Activated naive CD4-positive, alpha-beta T cell treated with anti-CD3 and anti-CD28 coated beads for 36 hours (primary cell): ENCODE measurements at regions of chr2 and their contacts with region 1.

Region 1: GRCh38 chr2:136305517-136306192 is 187.7 kb upstream of the CXCR4 start:
- DNase-seq: peak; percentile 85
- H3K4me3 Mint-ChIP-seq: no peak overlapping the region
- H3K27ac Mint-ChIP-seq: peak overlapping the region; percentile 81
- H3K4me1 Mint-ChIP-seq: peaks cover 21% of the 10 kb centered on the region
- H3K27me3 Mint-ChIP-seq: no peaks in the 10 kb centered on the region

Region 2: DNA sequence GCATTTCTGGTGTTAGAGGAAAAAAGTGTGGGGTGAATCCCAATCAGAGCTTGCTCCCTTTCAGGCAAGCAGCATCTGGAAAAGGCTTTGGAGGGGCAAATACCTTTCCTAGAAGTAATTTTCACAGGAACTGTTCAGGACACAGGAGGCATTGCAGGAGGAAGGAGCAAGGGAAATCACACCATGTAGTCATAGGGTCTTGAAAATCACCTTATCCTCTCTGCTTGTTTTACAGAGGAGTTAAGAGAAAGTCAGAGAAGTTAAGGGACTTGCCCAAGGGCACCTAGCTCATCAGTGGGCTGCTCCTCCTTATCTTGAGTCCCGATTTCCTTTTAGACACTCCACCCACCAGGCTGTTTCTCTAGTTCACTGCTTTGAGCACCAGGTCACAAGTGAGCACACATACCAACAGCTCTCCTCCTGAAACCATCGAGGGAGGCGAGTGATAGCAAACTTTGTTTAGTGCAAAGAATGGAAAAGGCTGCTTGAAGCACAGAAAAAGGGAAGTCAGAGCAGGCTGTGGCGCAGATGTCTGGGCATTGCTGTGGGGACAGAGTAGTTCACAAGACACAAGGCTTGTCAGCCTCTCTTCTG is 98.5 kb before region 1 on chr2:
- CTCF ChIA-PET with region 1: no interaction called
- intact Hi-C with region 1: loop called (anchors 1 kb)
- DNase-seq: peak; percentile 61
- H3K4me3 Mint-ChIP-seq: no peak overlapping the region
- H3K27ac Mint-ChIP-seq: peak overlapping the region; percentile 86
- H3K4me1 Mint-ChIP-seq: peaks cover 37% of the 10 kb centered on the region
- H3K27me3 Mint-ChIP-seq: no peaks in the 10 kb centered on the region

Region 3: DNA sequence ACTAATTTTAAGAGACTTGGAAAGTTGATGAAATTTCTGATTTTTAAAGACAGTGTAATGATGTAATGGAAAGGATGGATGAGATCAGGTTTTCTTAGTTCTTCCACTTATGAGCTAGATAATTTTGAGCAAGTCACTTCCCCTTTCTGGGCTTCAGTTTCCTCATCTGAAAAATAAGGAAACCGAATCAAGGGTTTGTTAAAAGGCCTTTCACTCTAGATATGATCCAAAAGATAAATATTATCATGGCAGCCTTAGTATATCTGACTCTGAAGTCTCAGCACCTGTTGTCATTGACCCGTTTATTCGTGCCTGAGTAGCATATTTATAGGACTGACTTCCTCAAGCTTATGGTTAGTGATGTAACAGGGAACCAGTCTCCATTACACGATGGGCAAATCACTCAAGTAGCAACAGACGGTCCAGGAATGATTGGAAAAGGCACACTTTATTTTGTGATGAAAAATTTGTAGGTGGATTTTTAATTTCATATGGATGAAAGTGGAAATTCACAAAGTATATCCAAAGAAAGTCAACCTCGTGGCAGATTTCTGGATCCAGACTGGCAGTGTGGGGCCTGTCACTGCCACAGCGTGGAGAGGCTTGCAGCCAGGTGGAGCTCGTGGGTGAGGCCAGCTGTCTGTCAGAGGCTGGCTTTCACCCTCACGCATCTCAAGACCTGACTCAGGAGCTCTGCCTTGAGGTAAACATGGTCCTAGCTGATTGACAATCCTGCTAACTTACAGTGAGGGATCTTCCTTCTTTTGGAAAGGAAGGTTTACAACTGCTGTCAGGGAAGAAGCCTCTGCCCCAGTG is 49.8 kb before region 1 on chr2:
- CTCF ChIA-PET with region 1: interaction called, 3 read pairs
- intact Hi-C with region 1: loop called (anchors 2 kb)
- DNase-seq: peak; percentile 66
- H3K4me3 Mint-ChIP-seq: no peak overlapping the region
- H3K27ac Mint-ChIP-seq: no peak overlapping the region
- H3K4me1 Mint-ChIP-seq: peaks cover 30% of the 10 kb centered on the region
- H3K27me3 Mint-ChIP-seq: peaks cover 2% of the 10 kb centered on the region

Region 4: GRCh38 chr2:136281281-136282114 is 24.2 kb before region 1 on chr2:
- CTCF ChIA-PET with region 1: interaction called, 4 read pairs
- intact Hi-C with region 1: loop called (anchors 1 kb)
- DNase-seq: peak; percentile 73
- H3K4me3 Mint-ChIP-seq: no peak overlapping the region
- H3K27ac Mint-ChIP-seq: peak overlapping the region; percentile 74
- H3K4me1 Mint-ChIP-seq: peaks cover 43% of the 10 kb centered on the region
- H3K27me3 Mint-ChIP-seq: no peaks in the 10 kb centered on the region